Posterior vena cava (tissue), 2 donors: ENCODE measurements at regions of chr16 and their contacts with region 1.

Region 1: DNA sequence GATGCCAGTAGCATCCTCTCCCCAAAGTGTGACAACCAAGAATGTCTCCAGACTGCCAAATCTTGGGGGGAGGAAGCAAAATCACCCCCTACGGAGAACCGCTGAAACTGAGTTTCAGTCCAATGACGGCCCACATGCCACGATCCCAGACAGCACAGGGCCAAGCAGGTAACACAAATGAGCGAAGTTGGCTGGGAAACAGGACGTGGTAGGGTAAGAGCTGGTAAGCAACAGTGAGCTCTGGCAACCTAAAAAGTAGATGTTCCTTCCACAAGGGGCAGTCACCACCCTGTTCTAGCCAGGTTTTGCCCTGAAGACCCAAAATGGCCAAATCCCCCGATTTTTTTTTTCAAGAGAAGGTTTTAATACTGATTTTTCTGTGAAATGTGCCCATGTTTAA is 25.4 kb downstream of the ZFHX3 start:
- DNase-seq: no peak

Region 2: GRCh38 chr16:73058221-73058615 is 35.7 kb after region 1 on chr16:
- intact Hi-C with region 1: loop called in 1 of 2 experiments (anchors 1 kb)
- DNase-seq: peak; percentile 85

Region 3: DNA sequence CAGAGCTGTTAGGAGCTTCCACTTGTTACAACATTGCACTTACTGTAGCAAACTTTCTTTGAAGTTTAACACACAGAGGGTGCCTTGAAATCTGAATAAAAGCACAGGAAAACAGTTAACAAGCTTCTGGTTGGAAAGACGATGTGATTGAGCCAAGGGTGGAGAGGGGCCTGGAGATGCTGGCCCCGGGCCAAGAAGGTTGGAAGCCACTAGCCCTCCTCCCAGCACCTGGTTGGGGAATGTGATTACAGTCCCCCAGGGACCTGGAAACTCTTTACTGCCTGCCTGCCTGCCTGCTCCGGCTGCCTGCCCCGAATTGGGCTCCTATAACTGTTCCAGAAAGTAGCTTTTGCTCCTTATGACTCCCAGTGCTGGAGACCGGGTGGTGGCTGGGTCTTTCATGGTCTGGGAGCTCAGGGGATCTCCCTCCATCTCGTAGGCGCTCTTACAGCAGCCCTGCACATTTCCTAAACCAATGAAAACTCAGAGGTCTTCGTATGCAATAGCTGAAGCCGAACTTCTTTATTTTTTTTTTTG is 73.4 kb after region 1 on chr16:
- intact Hi-C with region 1: loop called in 1 of 2 experiments (anchors 2 kb)
- DNase-seq: peak; percentile 53